ENCODE measurements at regions of chr10 and their contacts with region 1.

Region 1: GRCh38 chr10:91652364-91652763 is 19.5 kb upstream of the PPP1R3C start:
- DNase-seq: peak; percentile 98
- H3K4me3 ChIP-seq: peak overlapping the region in 1 of 3 experiments; percentile 51
- H3K27ac ChIP-seq: peak overlapping the region; percentile 98
- H3K4me1 ChIP-seq: peaks cover 34% of the 10 kb centered on the region
- H3K27me3 ChIP-seq: no peaks in the 10 kb centered on the region
- CTCF ChIP-seq: no peak

Region 2: GRCh38 chr10:91409869-91410637 is 242.3 kb before region 1 on chr10 and contains the start of gene HECTD2:
- CTCF ChIA-PET with region 1: no interaction called
- dilution Hi-C with region 1: no loop called
- in situ Hi-C with region 1: no loop called
- intact Hi-C with region 1: loop called (anchors 5 kb)
- DNase-seq: peak; percentile 74
- H3K4me3 ChIP-seq: peak within 1 kb of the TSS; percentile 53 to 81 (median 76)
- H3K27ac ChIP-seq: peak within 1 kb of the TSS; percentile 84
- H3K4me1 ChIP-seq: peaks cover 21% of the 10 kb centered on the region
- H3K27me3 ChIP-seq: no peaks in the 10 kb centered on the region
- CTCF ChIP-seq: peak in 1 of 2 donors; percentile 21
- total RNA-seq, gene HECTD2: 10.0 TPM

Region 3: DNA sequence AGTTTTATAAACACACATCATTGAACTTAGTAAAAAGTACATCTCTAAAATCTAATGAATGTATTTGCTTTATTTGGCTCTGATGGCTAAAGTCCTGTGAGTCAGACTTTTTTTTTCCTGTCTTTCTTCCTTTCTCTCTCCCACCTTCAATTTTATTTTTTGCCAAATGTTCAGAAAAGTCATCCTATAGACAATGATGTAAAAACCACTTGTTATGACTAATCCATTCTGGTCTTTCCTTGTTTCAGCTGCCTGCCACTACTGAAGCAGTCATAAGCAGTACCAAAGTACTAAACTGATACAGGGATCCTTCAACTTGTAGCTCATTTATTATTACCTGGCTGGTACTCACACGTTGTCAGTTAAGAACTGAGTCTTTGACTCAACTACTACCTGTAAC is 218.3 kb before region 1 on chr10:
- CTCF ChIA-PET with region 1: no interaction called
- dilution Hi-C with region 1: no loop called
- in situ Hi-C with region 1: no loop called
- intact Hi-C with region 1: no loop called
- DNase-seq: peak; percentile 54
- H3K4me3 ChIP-seq: no peak overlapping the region
- H3K27ac ChIP-seq: no peak overlapping the region
- H3K4me1 ChIP-seq: peaks cover 6% of the 10 kb centered on the region
- H3K27me3 ChIP-seq: no peaks in the 10 kb centered on the region
- CTCF ChIP-seq: no peak

Region 4: DNA sequence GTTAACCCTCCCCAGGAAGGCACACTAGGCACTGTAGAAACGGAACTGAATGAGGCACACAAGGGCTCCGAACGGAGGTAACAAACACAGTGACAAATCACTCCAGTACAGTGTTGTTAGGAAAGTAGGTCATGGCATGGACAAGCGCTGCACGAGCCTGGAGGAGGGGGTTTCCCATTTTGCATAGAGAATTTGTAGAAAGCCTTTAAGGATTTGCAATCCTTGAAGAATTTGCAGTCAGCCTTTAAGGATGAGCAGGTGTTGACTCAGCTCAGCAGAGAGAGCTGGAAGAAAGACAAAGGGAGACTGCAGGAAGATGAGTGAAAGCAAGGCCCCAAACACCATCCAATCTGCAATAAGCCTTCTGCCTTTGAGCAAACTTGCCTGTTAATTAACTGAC is 31.6 kb after region 1 on chr10:
- CTCF ChIA-PET with region 1: no interaction called
- dilution Hi-C with region 1: no loop called
- in situ Hi-C with region 1: no loop called
- intact Hi-C with region 1: loop called (anchors 1 kb)
- DNase-seq: peak; percentile 94
- H3K4me3 ChIP-seq: no peak overlapping the region
- H3K27ac ChIP-seq: peak overlapping the region; percentile 63
- H3K4me1 ChIP-seq: peaks cover 34% of the 10 kb centered on the region
- H3K27me3 ChIP-seq: no peaks in the 10 kb centered on the region
- CTCF ChIP-seq: no peak